MCF 10A (cell line): ENCODE measurements at regions of chr14 and their contacts with region 1.

Region 1: DNA sequence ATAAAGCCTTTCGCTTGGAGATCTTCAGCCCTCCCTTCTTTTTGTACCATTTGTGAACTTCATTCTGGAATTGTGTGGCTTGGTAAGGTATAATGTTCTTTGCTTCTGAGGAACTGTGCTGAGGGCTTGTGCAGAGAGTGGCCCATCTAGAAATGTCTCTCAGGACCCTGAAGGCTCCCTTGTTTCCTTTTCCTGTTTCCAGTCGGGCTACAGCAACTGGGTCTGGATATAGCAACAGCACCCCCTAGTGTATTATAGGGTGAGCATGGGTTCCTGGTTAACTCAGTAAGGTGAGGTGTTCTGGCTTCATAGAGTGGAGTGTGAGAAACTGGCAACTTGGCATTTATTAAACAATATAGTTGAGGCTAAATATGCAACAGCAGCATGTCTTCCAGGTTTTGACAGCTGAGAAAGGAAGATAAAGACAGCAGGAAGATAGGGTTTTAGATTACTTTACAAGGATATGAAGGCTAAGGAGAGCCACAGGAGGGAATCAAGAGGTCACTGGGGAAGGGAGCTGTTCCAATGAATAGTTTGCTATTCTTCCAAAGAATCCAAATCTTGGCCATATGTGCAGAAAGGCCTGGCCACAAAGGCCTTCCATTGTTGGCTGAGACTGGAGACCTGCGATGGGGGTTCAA is 49.1 kb upstream of the RNU6-8 start:
- DNase-seq: peak; percentile 76
- H3K4me3 Mint-ChIP-seq: no peak overlapping the region
- H3K27ac Mint-ChIP-seq: no peak overlapping the region
- H3K4me1 Mint-ChIP-seq: peaks cover 11% of the 10 kb centered on the region
- H3K27me3 Mint-ChIP-seq: no peaks in the 10 kb centered on the region
- CTCF ChIP-seq: peak; percentile 82

Region 2: DNA sequence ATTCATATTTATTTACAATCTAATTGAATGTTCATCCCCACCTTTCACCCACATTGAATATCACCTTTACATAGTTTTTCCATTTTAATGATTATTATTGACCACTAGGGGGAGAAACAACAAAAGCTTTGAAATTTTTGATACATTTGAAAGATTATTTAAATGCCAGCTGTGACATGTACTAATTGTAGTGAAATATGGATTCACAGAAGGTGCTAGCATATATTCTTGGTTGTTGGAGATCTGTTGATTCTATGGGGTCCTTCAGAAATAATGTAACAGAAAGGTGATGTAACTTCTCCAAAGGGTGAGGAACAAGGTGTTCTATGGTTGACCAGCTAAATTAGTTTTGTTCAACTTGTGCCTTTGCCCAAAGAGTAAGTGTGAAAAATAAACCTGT is 741.9 kb before region 1 on chr14:
- CTCF ChIA-PET with region 1: interaction called, 55 read pairs
- POLR2A ChIA-PET with region 1: no interaction called
- intact Hi-C with region 1: loop called (anchors 1 kb)
- DNase-seq: peak; percentile 43
- H3K4me3 Mint-ChIP-seq: no peak overlapping the region
- H3K27ac Mint-ChIP-seq: no peak overlapping the region
- H3K4me1 Mint-ChIP-seq: peaks cover 8% of the 10 kb centered on the region
- H3K27me3 Mint-ChIP-seq: no peaks in the 10 kb centered on the region
- CTCF ChIP-seq: peak; percentile 44

Region 3: DNA sequence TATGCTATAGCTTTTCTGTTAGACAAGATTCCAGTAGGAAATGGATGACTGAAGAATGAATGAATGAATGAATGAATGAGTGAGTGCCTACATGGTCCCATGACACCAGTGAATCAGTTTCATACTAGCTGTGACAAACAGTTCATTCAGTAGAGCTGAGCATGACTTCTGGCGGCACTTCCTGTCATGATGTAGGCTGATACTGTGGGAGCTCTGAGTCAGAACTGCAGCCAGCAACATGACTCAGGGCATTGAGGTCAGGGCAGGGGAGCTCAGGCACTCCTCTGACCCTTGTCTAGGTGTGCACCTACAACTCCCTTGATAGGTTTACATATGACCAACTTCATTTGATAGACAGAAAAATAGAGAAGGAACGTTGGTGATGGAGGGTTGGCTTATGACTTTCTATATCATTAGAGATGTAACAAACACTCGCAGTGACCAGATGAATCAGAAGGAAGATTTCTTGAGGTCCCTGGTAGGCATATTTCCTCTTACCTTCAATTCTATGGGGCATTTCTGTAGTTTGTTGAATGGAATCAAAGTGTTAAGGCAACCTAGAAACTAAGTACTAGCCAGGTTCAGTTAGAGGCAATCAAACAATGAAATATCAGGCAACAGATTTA is 314.3 kb before region 1 on chr14:
- CTCF ChIA-PET with region 1: interaction called, 123 read pairs
- POLR2A ChIA-PET with region 1: interaction called, 11 read pairs
- intact Hi-C with region 1: loop called (anchors 1 kb)
- DNase-seq: peak; percentile 87
- H3K4me3 Mint-ChIP-seq: no peak overlapping the region
- H3K27ac Mint-ChIP-seq: peak overlapping the region; percentile 83
- H3K4me1 Mint-ChIP-seq: peaks cover 28% of the 10 kb centered on the region
- H3K27me3 Mint-ChIP-seq: no peaks in the 10 kb centered on the region
- CTCF ChIP-seq: no peak

Region 4: GRCh38 chr14:32070282-32070681 is 181.9 kb before region 1 on chr14:
- CTCF ChIA-PET with region 1: interaction called, 40 read pairs
- POLR2A ChIA-PET with region 1: interaction called, 5 read pairs
- intact Hi-C with region 1: loop called (anchors 1 kb)
- DNase-seq: no peak
- H3K4me3 Mint-ChIP-seq: no peak overlapping the region
- H3K27ac Mint-ChIP-seq: no peak overlapping the region
- H3K4me1 Mint-ChIP-seq: peaks cover 11% of the 10 kb centered on the region
- H3K27me3 Mint-ChIP-seq: no peaks in the 10 kb centered on the region
- CTCF ChIP-seq: no peak

Region 5: GRCh38 chr14:32217301-32217700 is 34.8 kb before region 1 on chr14:
- CTCF ChIA-PET with region 1: no interaction called
- POLR2A ChIA-PET with region 1: no interaction called
- intact Hi-C with region 1: no loop called
- DNase-seq: no peak
- H3K4me3 Mint-ChIP-seq: no peak overlapping the region
- H3K27ac Mint-ChIP-seq: no peak overlapping the region
- H3K4me1 Mint-ChIP-seq: no peaks in the 10 kb centered on the region
- H3K27me3 Mint-ChIP-seq: no peaks in the 10 kb centered on the region
- CTCF ChIP-seq: no peak

Region 6: GRCh38 chr14:32469388-32470160 is 217.4 kb after region 1 on chr14:
- CTCF ChIA-PET with region 1: interaction called, 14 read pairs
- POLR2A ChIA-PET with region 1: interaction called, 9 read pairs
- intact Hi-C with region 1: loop called (anchors 1 kb)
- DNase-seq: peak; percentile 50
- H3K4me3 Mint-ChIP-seq: no peak overlapping the region
- H3K27ac Mint-ChIP-seq: peak overlapping the region; percentile 76
- H3K4me1 Mint-ChIP-seq: peaks cover 47% of the 10 kb centered on the region
- H3K27me3 Mint-ChIP-seq: no peaks in the 10 kb centered on the region
- CTCF ChIP-seq: peak; percentile 45

Region 7: GRCh38 chr14:32560209-32560857 is 308.2 kb after region 1 on chr14:
- CTCF ChIA-PET with region 1: interaction called, 11 read pairs
- POLR2A ChIA-PET with region 1: interaction called, 5 read pairs
- intact Hi-C with region 1: loop called (anchors 1 kb)
- DNase-seq: peak; percentile 85
- H3K4me3 Mint-ChIP-seq: no peak overlapping the region
- H3K27ac Mint-ChIP-seq: no peak overlapping the region
- H3K4me1 Mint-ChIP-seq: peaks cover 10% of the 10 kb centered on the region
- H3K27me3 Mint-ChIP-seq: no peaks in the 10 kb centered on the region
- CTCF ChIP-seq: peak; percentile 77